Kidney (tissue), 22 donors: ENCODE measurements at regions of chr14 and their contacts with region 1.

Region 1: GRCh38 chr14:61456720-61457119 is 135.3 kb downstream of the PRKCH start:
- DNase-seq: peak; percentile 68 to 77 (median 76)
- H3K4me3 ChIP-seq: no peak overlapping the region
- H3K27ac ChIP-seq: no peak overlapping the region
- H3K4me1 ChIP-seq: peaks cover 0 to 2% (median 0%) of the 10 kb centered on the region in 3 donors
- H3K27me3 ChIP-seq: no peaks in the 10 kb centered on the region
- CTCF ChIP-seq: peak; percentile 77

Region 2: GRCh38 chr14:61296719-61297502 is 159.8 kb before region 1 on chr14:
- intact Hi-C with region 1: loop called (anchors 10 kb)
- DNase-seq: peak in 2 of 5 donors; percentile 40 to 64
- H3K4me3 ChIP-seq: no peak overlapping the region
- H3K27ac ChIP-seq: no peak overlapping the region
- H3K4me1 ChIP-seq: no peaks in the 10 kb centered on the region
- H3K27me3 ChIP-seq: no peaks in the 10 kb centered on the region
- CTCF ChIP-seq: peak; percentile 49

Region 3: DNA sequence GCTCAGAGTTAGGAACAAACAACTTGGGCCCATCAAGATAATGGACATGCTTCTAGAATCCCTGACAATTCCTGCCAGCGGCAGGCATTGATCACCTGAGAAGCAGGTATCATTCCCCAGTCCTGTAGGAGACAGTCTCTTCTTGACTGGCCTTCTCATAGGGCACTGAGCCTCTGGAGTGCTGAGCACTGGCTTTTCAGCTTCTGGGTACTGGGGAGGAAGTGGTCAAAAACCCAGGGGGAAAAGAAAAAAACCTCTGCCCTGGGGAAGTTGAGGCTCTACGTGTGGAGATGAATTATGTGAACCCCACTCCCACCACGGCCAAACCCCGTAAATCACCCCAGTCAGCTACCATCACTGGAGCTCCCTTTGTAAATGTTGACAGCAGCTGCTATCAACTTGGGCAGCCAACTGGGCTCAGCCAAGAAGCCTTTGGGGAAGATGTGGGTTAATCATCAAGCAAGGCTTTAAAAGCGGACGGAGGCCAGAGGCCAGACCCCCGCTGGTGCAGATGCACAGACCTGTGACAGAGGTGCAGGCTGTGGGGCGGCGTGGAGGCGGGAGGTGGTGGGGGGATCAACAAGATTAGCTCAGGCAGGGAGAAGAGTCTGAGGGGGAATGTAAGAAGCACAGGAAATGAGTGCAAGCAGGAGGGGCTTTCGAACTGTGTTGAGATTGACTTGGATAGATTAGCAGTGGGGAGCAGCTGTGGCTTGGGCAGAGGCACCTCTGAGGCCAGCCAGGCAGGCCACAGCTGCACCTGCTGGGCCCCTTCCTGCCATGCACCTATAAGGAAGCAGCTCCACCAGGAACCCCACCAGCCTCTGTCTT is 133.2 kb after region 1 on chr14:
- intact Hi-C with region 1: no loop called
- DNase-seq: peak; percentile 44 to 82 (median 54)
- H3K4me3 ChIP-seq: no peak overlapping the region
- H3K27ac ChIP-seq: peak overlapping the region; percentile 12 to 42
- H3K4me1 ChIP-seq: peaks cover 0 to 28% (median 12%) of the 10 kb centered on the region in 3 donors
- H3K27me3 ChIP-seq: no peaks in the 10 kb centered on the region
- CTCF ChIP-seq: no peak

Region 4: GRCh38 chr14:61832783-61833182 is 376.1 kb after region 1 on chr14:
- intact Hi-C with region 1: loop called (anchors 5 kb)
- DNase-seq: no peak
- H3K4me3 ChIP-seq: no peak overlapping the region
- H3K27ac ChIP-seq: no peak overlapping the region
- H3K4me1 ChIP-seq: no peaks in the 10 kb centered on the region
- H3K27me3 ChIP-seq: no peaks in the 10 kb centered on the region
- CTCF ChIP-seq: no peak

Region 5: GRCh38 chr14:61841145-61841544 is 384.4 kb after region 1 on chr14:
- intact Hi-C with region 1: loop called (anchors 5 kb)
- DNase-seq: peak in 2 of 5 donors; percentile 50 to 70
- H3K4me3 ChIP-seq: no peak overlapping the region
- H3K27ac ChIP-seq: no peak overlapping the region
- H3K4me1 ChIP-seq: no peaks in the 10 kb centered on the region
- H3K27me3 ChIP-seq: no peaks in the 10 kb centered on the region
- CTCF ChIP-seq: no peak

Region 6: GRCh38 chr14:62126879-62127478 is 670.3 kb after region 1 on chr14:
- intact Hi-C with region 1: loop called (anchors 10 kb)
- DNase-seq: peak in 2 of 5 donors; percentile 74 to 83
- H3K4me3 ChIP-seq: no peak overlapping the region
- H3K27ac ChIP-seq: no peak overlapping the region
- H3K4me1 ChIP-seq: no peaks in the 10 kb centered on the region
- H3K27me3 ChIP-seq: no peaks in the 10 kb centered on the region
- CTCF ChIP-seq: peak; percentile 63